ENCODE measurements at regions of chr1 and their contacts with region 1.

Region 1: DNA sequence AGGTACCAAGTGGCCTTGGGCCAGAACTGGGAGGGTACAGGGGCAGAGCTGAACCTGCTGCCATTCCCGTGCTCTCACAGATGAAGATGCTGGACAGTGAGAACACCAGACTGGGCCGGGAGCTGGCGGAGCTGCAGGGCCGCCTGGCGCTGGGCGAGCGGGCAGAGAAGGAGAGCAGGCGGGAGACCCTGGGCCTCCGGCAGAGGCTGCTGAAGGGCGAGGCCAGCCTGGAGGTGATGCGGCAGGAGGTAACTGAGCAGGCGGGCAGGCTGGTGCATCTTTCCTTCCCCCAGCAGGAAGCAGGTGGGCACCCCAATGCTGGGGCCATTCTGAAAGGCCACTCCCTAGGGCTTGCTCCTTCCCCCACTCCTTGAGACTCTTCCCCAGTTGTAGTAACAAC is 21.9 kb downstream of the MFAP2 start:
- DNase-seq: no peak
- H3K4me3 ChIP-seq: no peak overlapping the region
- H3K27ac ChIP-seq: no peak overlapping the region
- H3K4me1 ChIP-seq: no peaks in the 10 kb centered on the region
- H3K27me3 ChIP-seq: no peaks in the 10 kb centered on the region
- CTCF ChIP-seq: no peak
- POLR2A ChIP-seq: no peak

Region 2: DNA sequence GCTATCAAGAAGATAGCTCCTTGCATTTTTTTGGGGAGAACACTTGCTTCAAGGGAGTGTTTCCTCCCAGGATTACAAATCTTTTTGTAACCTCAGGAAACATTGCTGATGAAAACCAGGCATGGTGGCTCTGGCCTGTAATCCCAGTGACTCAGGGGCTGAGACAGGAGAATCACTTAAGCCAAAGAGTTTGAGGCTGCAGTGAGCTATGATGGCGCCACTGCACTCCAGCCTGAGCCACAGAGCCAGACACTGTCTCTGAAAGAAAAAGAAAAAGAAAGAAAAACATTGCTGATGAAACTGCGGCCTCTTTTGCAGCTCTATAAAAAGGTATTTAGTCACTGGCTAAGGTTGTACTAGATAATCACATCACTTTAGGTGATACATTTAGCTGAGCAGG is 55.4 kb before region 1 on chr1:
- intact Hi-C with region 1: no loop called
- DNase-seq: peak; percentile 15
- H3K4me3 ChIP-seq: no peak overlapping the region
- H3K27ac ChIP-seq: peak overlapping the region in 1 of 2 donors; percentile 85
- H3K4me1 ChIP-seq: peaks cover 7% of the 10 kb centered on the region
- H3K27me3 ChIP-seq: no peaks in the 10 kb centered on the region
- CTCF ChIP-seq: no peak
- POLR2A ChIP-seq: no peak

Region 3: GRCh38 chr1:17027403-17027802 is 68.9 kb after region 1 on chr1:
- intact Hi-C with region 1: loop called (anchors 10 kb)
- DNase-seq: peak; percentile 14
- H3K4me3 ChIP-seq: no peak overlapping the region
- H3K27ac ChIP-seq: no peak overlapping the region
- H3K4me1 ChIP-seq: no peaks in the 10 kb centered on the region
- H3K27me3 ChIP-seq: no peaks in the 10 kb centered on the region
- CTCF ChIP-seq: no peak
- POLR2A ChIP-seq: no peak

Measured in testis (tissue), 5 donors.